Spleen (tissue), 13 donors: ENCODE measurements at regions of chr21 and their contacts with region 1.

Region 1: DNA sequence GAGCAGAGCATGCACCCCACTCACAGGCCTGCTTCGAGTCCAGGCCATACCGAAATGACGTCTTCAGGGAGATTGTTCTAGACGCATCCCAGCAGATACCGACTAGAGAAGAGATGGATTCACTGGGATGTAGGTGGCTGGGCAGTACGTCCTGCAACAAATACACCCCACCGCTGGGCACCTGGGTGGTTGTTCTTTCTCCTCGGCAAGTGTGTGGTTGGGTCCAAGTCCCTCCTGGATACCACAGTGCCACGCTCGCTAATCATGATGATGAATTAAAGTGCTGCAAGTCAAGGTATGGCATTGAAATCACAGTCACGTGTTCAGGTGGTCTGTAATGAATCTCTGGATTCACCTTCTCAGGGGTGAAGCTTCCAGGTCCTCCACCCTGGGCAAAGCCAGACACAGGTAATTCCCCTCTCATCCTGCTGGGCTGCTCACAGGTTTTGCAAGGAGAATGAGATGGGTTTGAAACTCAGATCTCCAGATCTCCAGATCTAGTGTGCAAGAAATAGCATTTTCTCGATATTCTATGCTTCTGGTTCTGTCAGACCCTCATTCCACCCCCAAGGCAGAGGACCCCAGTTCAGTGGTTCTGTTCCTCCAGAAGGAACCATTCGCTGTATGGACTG is 45.7 kb downstream of the UBASH3A start:
- DNase-seq: peak; percentile 47
- H3K4me3 ChIP-seq: no peak overlapping the region
- H3K27ac ChIP-seq: peak overlapping the region in 5 of 8 donors; percentile 36 to 77 (median 52)
- H3K4me1 ChIP-seq: peaks cover 0 to 25% (median 21%) of the 10 kb centered on the region in 6 donors
- H3K27me3 ChIP-seq: peaks cover 0 to 24% (median 0%) of the 10 kb centered on the region in 7 donors
- CTCF ChIP-seq: no peak
- POLR2A ChIP-seq: no peak

Region 2: DNA sequence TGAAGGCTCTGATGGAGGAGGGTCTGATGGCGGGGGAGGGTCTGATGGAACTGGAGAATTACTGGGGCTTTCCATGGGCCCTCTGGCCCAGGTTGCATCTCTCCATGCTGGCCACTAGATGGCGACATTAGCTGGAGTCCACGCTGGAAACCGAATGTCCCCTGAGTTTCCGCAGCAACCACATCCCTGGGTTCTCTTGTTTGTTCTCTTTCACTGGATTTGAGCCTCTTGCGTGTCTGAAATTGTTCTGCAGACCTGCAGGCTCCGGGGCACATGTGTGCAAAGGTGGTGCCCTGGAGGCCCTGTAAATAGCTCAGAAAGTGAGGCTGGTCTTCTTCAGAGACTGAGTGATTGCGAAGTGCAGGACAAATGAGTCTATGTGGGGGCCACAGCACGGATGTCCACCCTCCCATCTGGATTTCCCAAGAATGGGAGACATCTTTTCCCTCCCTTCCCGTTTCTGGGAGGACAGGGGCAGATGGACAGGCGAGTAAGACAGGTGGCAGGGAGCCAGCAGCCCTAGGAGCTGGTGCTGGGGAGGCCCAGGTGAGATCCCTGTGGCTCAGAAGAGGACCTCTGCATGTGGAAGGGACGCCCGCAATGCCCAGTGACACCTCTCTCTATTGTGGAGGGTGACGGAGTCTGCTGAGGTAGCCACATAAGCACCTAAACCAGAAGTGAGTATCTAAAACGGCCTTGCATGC is 303.7 kb before region 1 on chr21:
- intact Hi-C with region 1: loop called (anchors 5 kb)
- DNase-seq: peak; percentile 82
- H3K4me3 ChIP-seq: no peak overlapping the region
- H3K27ac ChIP-seq: no peak overlapping the region
- H3K4me1 ChIP-seq: peaks cover 0 to 10% (median 6%) of the 10 kb centered on the region in 6 donors
- H3K27me3 ChIP-seq: peaks cover 0 to 14% (median 0%) of the 10 kb centered on the region in 7 donors
- CTCF ChIP-seq: peak; percentile 90 to 98 (median 96)
- POLR2A ChIP-seq: no peak